ENCODE measurements at regions of chr7 and their contacts with region 1.

Region 1: DNA sequence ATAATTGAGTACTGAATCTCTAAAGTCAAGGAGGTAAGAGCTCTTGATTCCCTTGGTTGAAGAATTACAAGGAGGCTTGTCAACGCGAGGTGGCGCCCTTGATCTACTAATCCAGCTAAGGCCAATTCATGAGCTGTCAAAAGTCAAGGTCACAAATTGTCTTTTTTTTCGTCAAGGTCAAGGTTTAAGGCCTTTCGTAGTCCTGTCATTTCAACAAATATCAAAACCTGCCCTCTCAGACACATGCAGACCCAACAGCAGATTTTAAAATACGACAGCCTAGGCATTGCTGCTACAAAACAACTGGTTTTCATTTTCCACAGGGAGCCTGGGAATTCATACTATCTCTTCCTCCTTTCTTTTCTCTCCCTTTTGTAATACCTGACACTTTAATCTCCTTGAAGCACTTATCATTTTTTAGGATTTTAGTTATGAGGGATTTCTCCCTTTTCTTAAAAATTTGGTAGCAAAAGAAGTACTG is 3.6 kb downstream of the HOXA13 start:
- DNase-seq: peak; percentile 61
- H3K4me3 ChIP-seq: no peak overlapping the region
- H3K27ac ChIP-seq: no peak overlapping the region
- H3K4me1 ChIP-seq: no peaks in the 10 kb centered on the region
- H3K27me3 ChIP-seq: peaks cover 94% of the 10 kb centered on the region
- CTCF ChIP-seq: peak; percentile 86

Region 2: GRCh38 chr7:27251652-27252590 is 55.6 kb after region 1 on chr7:
- CTCF ChIA-PET with region 1: no interaction called
- POLR2A ChIA-PET with region 1: no interaction called
- intact Hi-C with region 1: no loop called
- DNase-seq: no peak
- H3K4me3 ChIP-seq: no peak overlapping the region
- H3K27ac ChIP-seq: no peak overlapping the region
- H3K4me1 ChIP-seq: no peaks in the 10 kb centered on the region
- H3K27me3 ChIP-seq: peaks cover 81% of the 10 kb centered on the region
- CTCF ChIP-seq: no peak

Region 3: DNA sequence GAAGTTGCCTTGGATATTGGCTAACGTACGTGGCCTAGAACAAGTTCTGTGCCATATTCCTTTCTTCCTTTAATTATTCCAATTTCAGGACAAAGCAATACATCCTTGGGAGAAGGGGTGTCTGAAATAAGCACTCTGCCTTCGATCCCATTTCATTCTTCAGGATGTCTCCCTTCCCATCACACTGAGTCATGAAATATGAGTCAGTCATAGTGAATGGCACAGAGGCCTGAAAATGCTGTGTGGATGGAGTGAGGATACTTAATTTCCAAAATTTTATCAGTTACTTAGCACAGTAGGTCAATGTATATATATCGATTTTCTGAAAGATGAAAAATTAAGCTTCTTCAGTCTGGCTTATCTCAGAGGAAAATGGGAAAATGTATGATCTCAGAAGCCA is 65.8 kb after region 1 on chr7:
- CTCF ChIA-PET with region 1: no interaction called
- POLR2A ChIA-PET with region 1: no interaction called
- intact Hi-C with region 1: no loop called
- DNase-seq: no peak
- H3K4me3 ChIP-seq: no peak overlapping the region
- H3K27ac ChIP-seq: no peak overlapping the region
- H3K4me1 ChIP-seq: no peaks in the 10 kb centered on the region
- H3K27me3 ChIP-seq: peaks cover 28% of the 10 kb centered on the region
- CTCF ChIP-seq: no peak

Region 4: DNA sequence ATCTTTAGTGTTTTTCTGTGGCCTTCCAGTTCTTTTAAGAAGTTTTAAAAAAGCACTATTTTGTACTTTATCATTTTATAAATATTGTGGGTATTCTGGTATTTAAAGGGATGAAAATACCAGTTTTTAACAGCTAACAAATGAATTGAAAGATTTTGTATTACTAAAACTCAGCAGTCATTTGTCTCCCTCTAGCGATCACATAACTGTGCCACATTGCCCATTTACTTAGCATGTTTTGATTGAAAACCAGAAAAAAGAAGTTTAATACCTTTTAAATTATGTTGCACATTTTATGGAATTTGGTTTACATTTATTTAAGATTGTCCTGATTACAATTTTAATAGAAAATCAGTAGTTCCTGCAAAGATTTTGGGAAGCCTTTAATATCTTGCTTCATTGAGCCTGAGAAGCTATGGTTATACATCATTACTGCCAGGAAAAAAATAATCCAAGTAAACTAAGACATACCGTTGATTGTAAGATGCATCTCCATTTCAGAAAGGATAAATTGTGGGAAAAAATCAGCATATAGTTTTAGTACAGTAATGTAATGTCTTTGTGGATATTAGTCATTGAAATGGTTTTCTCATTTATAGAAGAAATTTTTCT is 578.5 kb after region 1 on chr7:
- CTCF ChIA-PET with region 1: interaction called, 9 read pairs
- POLR2A ChIA-PET with region 1: no interaction called
- intact Hi-C with region 1: loop called (anchors 5 kb)
- DNase-seq: peak; percentile 36
- H3K4me3 ChIP-seq: no peak overlapping the region
- H3K27ac ChIP-seq: no peak overlapping the region
- H3K4me1 ChIP-seq: no peaks in the 10 kb centered on the region
- H3K27me3 ChIP-seq: no peaks in the 10 kb centered on the region
- CTCF ChIP-seq: peak; percentile 79

Region 5: GRCh38 chr7:27921081-27921836 is 724.9 kb after region 1 on chr7:
- CTCF ChIA-PET with region 1: interaction called, 11 read pairs
- POLR2A ChIA-PET with region 1: no interaction called
- intact Hi-C with region 1: loop called (anchors 2 kb)
- DNase-seq: peak; percentile 83
- H3K4me3 ChIP-seq: no peak overlapping the region
- H3K27ac ChIP-seq: no peak overlapping the region
- H3K4me1 ChIP-seq: peaks cover 3% of the 10 kb centered on the region
- H3K27me3 ChIP-seq: peaks cover 78% of the 10 kb centered on the region
- CTCF ChIP-seq: peak; percentile 72

Region 6: GRCh38 chr7:28078036-28078901 is 881.9 kb after region 1 on chr7:
- CTCF ChIA-PET with region 1: interaction called, 4 read pairs
- POLR2A ChIA-PET with region 1: no interaction called
- intact Hi-C with region 1: loop called (anchors 2 kb)
- DNase-seq: peak; percentile 58
- H3K4me3 ChIP-seq: no peak overlapping the region
- H3K27ac ChIP-seq: no peak overlapping the region
- H3K4me1 ChIP-seq: no peaks in the 10 kb centered on the region
- H3K27me3 ChIP-seq: peaks cover 33% of the 10 kb centered on the region
- CTCF ChIP-seq: peak; percentile 96

Measured in A673 (cell line).